ENCODE measurements at regions of chr5 and their contacts with region 1.

Region 1: DNA sequence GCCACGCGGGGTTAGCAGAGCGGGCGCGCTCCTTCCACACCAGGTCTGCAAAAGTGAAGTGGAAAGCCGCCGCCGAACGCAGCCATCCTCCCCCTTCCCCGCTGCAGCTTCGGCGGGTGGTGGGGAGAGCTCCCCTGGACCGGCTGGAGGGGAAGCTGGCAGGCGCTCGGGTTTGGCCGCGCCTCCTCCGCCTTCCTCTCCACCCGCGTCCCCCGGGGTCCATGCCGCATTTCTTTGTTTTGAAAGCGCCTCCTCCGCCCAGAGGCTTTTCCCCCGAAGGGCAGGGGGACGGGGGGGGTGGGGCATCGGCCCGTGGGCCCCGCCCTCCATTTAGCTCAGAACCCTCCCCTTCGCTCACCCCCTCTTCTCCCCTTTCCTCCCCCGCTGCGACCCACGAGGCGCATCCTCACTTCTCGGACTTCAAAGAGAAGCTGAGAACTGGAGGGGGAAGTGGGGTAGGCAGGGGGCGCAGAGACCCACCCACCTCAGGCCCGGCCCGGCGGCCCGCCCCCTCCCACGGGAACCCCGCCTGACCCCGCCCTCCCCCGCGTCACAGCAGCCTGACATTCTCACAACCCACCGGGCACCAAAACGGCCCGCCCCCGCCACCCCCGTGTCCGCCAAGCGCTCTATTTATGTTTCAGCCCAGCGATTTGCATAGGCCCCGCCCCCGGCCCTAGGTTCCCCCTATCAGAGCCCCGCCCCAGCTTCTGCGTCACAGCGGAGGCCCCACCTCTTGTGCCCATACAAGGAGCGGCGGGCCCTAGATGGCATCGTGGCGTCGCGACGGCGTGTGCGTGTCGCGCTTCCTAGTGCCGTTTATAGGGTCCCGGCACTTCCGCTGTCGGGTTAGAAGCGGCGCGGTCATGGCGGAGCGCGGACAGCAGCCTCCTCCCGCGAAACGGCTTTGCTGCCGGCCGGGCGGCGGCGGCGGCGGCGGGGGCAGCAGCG is at the start of gene ZSWIM6:
- H3K4me3 Mint-ChIP-seq: peak within 1 kb of the TSS; percentile 91
- H3K27ac Mint-ChIP-seq: peak within 1 kb of the TSS; percentile 94
- H3K4me1 Mint-ChIP-seq: peaks cover 59% of the 10 kb centered on the region
- H3K27me3 Mint-ChIP-seq: no peaks in the 10 kb centered on the region

Region 2: GRCh38 chr5:60883229-60883628 is 448.5 kb before region 1 on chr5:
- intact Hi-C with region 1: no loop called
- H3K4me3 Mint-ChIP-seq: no peak overlapping the region
- H3K27ac Mint-ChIP-seq: no peak overlapping the region
- H3K4me1 Mint-ChIP-seq: no peaks in the 10 kb centered on the region
- H3K27me3 Mint-ChIP-seq: no peaks in the 10 kb centered on the region

Region 3: DNA sequence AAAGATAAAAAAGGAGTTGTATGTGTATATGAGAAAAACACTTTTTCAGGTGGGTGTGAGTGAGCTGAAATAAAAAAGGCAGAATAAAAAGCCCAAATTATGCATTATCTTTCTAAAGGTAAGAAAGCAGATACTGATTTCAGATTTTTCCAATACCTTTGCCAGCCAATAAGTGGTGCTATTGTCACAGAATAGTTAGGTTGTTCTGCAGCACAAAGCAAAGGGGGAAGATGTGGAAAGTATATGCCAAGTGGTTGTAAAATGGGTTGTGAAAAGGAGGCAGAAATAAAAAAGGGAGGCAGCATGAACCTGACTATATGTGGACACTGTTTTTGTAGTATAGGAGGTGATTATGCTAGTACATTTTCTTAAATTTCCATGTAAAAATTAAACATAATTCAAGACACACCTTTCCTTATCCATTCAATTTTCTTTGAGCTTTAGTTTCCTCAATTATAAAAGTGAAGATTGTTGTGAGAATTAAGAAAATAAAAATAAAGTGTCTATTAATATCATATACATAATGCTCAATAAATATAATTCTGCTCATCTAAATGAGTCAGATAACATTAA is 276.2 kb before region 1 on chr5:
- intact Hi-C with region 1: loop called (anchors 5 kb)
- H3K4me3 Mint-ChIP-seq: no peak overlapping the region
- H3K27ac Mint-ChIP-seq: no peak overlapping the region
- H3K4me1 Mint-ChIP-seq: no peaks in the 10 kb centered on the region
- H3K27me3 Mint-ChIP-seq: no peaks in the 10 kb centered on the region

Region 4: GRCh38 chr5:61162010-61162831 is 169.5 kb before region 1 on chr5 and contains the start of gene SMIM15:
- intact Hi-C with region 1: loop called (anchors 1 kb)
- H3K4me3 Mint-ChIP-seq: peak within 1 kb of the TSS; percentile 84
- H3K27ac Mint-ChIP-seq: peak within 1 kb of the TSS; percentile 97
- H3K4me1 Mint-ChIP-seq: peaks cover 45% of the 10 kb centered on the region
- H3K27me3 Mint-ChIP-seq: no peaks in the 10 kb centered on the region

Region 5: DNA sequence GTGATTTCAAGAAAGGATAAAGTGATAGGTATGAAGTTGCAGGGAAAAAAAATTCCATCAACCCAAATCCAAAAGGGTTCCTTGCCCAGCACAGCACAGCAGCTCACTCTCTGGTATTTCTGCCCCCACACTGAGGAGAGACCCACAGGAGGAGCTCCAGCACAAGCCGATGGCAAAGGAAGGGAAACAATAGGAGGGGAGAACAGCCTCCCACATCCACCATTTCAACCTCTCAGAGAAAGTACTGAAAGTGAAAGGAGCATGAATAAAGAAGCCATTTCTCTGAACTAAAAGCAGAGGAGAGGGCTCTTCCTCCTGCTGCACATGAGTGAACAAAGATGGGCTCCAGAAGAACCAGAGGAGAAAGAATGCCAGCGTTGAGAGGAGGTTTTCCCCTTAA is 54.5 kb before region 1 on chr5:
- intact Hi-C with region 1: loop called (anchors 2 kb)
- H3K4me3 Mint-ChIP-seq: peak overlapping the region; percentile 74
- H3K27ac Mint-ChIP-seq: no peak overlapping the region
- H3K4me1 Mint-ChIP-seq: peaks cover 45% of the 10 kb centered on the region
- H3K27me3 Mint-ChIP-seq: no peaks in the 10 kb centered on the region

Region 6: DNA sequence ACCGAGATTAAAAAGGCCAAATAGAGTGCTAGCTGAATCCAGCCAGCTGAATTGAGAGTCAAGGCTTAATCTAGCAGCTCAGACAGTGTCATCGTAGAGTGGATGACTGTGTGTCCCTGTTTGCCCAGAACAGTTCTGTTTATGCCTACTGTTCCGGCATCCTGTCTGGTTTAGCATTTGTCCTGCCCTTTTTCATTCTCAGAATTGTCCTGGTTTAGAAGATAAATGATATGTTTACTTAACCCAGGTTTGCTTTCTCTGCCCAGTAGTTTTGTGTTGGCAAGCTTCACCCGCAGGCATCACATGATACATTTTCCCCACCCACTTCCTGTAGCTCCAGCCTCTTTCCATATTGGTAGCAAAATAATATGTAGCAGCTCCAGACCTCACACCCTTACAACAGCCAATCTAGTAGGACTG is 40.9 kb before region 1 on chr5:
- intact Hi-C with region 1: no loop called
- H3K4me3 Mint-ChIP-seq: no peak overlapping the region
- H3K27ac Mint-ChIP-seq: no peak overlapping the region
- H3K4me1 Mint-ChIP-seq: peaks cover 26% of the 10 kb centered on the region
- H3K27me3 Mint-ChIP-seq: no peaks in the 10 kb centered on the region

Region 7: DNA sequence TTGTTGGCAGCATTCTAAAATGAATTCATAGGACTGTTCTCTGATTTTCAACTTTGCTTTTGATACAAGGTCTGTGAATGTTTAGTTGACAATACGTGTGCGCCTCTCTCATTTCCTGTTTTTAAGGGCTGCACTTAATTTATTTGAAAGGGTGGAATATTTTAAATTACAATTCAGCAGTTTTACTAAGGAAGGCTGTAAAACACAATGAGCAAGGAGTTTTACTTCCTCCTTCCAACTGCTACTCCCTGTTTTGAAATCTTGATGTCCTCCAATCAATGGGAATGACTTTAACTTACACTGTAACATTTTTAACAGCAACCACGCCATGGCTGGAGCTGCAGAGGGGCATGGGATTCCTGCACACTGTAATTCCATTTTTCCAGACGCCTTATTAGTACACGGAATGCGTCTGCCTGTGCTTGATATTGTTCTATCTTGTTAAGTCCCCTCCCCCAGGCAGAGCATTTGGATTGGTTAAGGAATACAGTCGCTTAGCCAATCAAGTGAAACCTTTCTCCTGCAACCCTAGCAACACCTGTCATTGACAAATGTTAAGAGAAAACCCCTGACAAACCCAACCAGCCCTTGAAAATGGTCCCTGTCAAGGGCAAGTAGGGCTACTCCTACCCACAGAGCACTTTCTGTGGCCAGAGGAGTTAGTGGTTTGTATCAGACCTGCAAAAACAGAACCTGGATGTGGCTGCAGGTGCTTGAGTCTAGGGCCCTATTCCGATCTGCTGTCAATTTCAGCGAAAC is 12.1 kb before region 1 on chr5:
- intact Hi-C with region 1: loop called (anchors 1 kb)
- H3K4me3 Mint-ChIP-seq: peak overlapping the region; percentile 30
- H3K27ac Mint-ChIP-seq: peak overlapping the region; percentile 87
- H3K4me1 Mint-ChIP-seq: peaks cover 76% of the 10 kb centered on the region
- H3K27me3 Mint-ChIP-seq: no peaks in the 10 kb centered on the region

Region 8: GRCh38 chr5:61408476-61409168 is 76.9 kb after region 1 on chr5:
- intact Hi-C with region 1: loop called (anchors 2 kb)
- H3K4me3 Mint-ChIP-seq: peak overlapping the region; percentile 56
- H3K27ac Mint-ChIP-seq: peak overlapping the region; percentile 60
- H3K4me1 Mint-ChIP-seq: peaks cover 48% of the 10 kb centered on the region
- H3K27me3 Mint-ChIP-seq: no peaks in the 10 kb centered on the region

Region 9: GRCh38 chr5:61641747-61642578 is 310.3 kb after region 1 on chr5:
- intact Hi-C with region 1: no loop called
- H3K4me3 Mint-ChIP-seq: no peak overlapping the region
- H3K27ac Mint-ChIP-seq: no peak overlapping the region
- H3K4me1 Mint-ChIP-seq: no peaks in the 10 kb centered on the region
- H3K27me3 Mint-ChIP-seq: peaks cover 6% of the 10 kb centered on the region

Region 10: GRCh38 chr5:61658592-61659008 is 326.9 kb after region 1 on chr5:
- intact Hi-C with region 1: loop called (anchors 10 kb)
- H3K4me3 Mint-ChIP-seq: no peak overlapping the region
- H3K27ac Mint-ChIP-seq: no peak overlapping the region
- H3K4me1 Mint-ChIP-seq: peaks cover 5% of the 10 kb centered on the region
- H3K27me3 Mint-ChIP-seq: peaks cover 18% of the 10 kb centered on the region